Endothelial cell of umbilical vein (primary cell): ENCODE measurements at regions of chr17 and their contacts with region 1.

Region 1: DNA sequence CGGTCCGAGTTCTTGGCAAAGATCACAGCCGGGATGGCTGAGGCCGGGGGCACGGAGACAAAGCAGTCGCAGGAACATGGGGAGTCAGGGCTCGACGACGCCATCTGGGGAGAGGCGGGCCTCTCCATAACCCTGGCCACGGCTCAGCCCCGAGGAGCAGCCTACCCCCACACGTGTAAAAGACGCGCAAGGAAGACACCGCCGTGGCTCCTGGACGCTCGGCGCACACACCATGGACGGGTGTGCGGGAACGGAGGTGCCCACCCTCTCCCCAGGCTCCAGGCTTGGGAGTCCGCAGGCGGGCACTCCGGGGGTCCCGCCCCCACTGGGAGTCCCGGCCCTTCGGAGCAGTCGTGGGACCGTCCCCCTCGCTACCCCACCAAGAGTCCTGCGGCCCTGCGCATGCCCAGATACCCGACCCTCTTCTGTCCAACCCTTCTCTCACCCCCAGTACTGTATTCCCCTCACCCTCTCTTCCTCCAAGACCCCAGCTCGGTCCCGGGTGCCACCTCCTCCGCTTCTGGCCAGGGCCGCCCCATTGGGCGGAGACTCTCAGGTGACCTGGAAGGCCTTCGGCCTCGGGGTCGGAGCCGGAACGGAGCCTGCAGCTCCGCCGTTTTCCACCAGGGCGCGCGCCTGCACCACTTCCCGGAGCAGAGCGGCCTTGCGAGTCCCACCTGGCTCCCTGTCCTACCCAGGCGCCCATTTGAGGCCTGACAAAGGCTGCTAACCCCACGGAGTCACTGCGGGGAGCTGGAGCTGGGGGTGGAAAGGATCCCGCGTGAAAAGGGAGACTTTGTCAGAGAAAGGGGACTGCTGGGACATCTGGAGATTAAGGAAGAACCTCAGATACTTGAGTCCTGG is at the start of gene SCRN2:
- DNase-seq: peak; percentile 91
- H3K4me3 ChIP-seq: peak within 1 kb of the TSS; percentile 65 to 86 (median 65)
- H3K27ac ChIP-seq: no peak within 1 kb of the TSS
- H3K4me1 ChIP-seq: peaks cover 5% of the 10 kb centered on the region
- H3K27me3 ChIP-seq: no peaks in the 10 kb centered on the region
- CTCF ChIP-seq: peak; percentile 97 to 99
- POLR2A ChIP-seq: peak; percentile 32
- total RNA-seq, gene SCRN2: 31.1 and 31.7 TPM in 2 replicates

Region 2: GRCh38 chr17:47423406-47424295 is 417.3 kb before region 1 on chr17:
- CTCF ChIA-PET with region 1: no interaction called
- POLR2A ChIA-PET with region 1: no interaction called
- dilution Hi-C with region 1: no loop called
- intact Hi-C with region 1: no loop called
- DNase-seq: peak; percentile 15
- H3K4me3 ChIP-seq: peak overlapping the region; percentile 36 to 59 (median 46)
- H3K27ac ChIP-seq: no peak overlapping the region
- H3K4me1 ChIP-seq: no peaks in the 10 kb centered on the region
- H3K27me3 ChIP-seq: no peaks in the 10 kb centered on the region
- CTCF ChIP-seq: no peak
- POLR2A ChIP-seq: no peak

Region 3: GRCh38 chr17:47882247-47882646 is 41.3 kb after region 1 on chr17:
- CTCF ChIA-PET with region 1: interaction called, 367 read pairs
- POLR2A ChIA-PET with region 1: no interaction called
- dilution Hi-C with region 1: no loop called
- intact Hi-C with region 1: no loop called
- DNase-seq: peak; percentile 38
- H3K4me3 ChIP-seq: no peak overlapping the region
- H3K27ac ChIP-seq: no peak overlapping the region
- H3K4me1 ChIP-seq: peaks cover 7% of the 10 kb centered on the region
- H3K27me3 ChIP-seq: peaks cover 3 to 6% of the 10 kb centered on the region in 2 experiments
- CTCF ChIP-seq: no peak
- POLR2A ChIP-seq: no peak

Region 4: DNA sequence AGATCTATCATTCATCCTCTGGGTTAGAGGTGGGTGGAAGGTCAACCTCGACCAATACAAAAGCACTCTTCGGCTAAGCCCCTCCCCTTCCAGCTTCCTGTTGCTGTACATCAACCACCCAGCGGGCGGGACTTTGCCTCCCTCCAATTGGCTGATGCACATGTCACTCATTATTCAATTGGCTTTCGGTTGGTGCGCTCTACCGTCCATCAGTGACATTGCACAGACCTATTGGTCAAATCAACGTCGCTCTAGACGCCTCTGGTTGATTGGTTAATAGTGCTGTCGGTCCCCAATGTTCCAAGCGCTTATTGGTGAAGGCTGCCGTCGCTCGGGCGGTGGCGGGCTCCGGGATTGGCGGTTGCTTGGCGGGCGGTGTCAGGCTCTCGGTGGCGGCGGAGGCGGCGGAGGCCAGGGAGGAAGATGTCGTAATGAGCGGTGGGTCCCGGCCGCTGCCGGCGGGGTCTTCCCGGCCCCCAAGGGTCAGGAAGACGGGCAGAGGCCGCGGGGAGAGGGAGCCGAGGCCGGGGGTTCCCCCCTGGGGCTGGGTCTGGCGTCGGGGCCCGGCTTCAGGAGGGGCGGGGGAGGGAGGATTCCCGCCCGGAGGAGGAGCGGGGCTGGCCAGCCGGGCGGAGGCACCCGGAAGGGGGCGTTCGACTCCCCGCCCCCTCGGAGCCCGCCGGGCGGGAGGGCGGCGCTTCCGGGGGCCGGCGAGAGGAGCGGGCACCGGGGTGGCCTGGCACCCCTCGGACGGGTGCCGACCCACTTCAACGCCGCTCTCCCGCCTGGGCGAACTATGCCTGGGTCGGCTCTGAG is 55.1 kb after region 1 on chr17 and contains the start of gene SP2:
- CTCF ChIA-PET with region 1: interaction called, 367 read pairs
- POLR2A ChIA-PET with region 1: interaction called, 5 read pairs
- dilution Hi-C with region 1: no loop called
- intact Hi-C with region 1: loop called (anchors 1 kb)
- DNase-seq: peak; percentile 100
- H3K4me3 ChIP-seq: peak within 1 kb of the TSS; percentile 51 to 90 (median 84)
- H3K27ac ChIP-seq: peak within 1 kb of the TSS; percentile 75
- H3K4me1 ChIP-seq: peaks cover 15% of the 10 kb centered on the region
- H3K27me3 ChIP-seq: no peaks in the 10 kb centered on the region
- CTCF ChIP-seq: no peak
- POLR2A ChIP-seq: peak; percentile 60
- total RNA-seq, gene SP2: 18.5 and 18.6 TPM in 2 replicates

Region 5: DNA sequence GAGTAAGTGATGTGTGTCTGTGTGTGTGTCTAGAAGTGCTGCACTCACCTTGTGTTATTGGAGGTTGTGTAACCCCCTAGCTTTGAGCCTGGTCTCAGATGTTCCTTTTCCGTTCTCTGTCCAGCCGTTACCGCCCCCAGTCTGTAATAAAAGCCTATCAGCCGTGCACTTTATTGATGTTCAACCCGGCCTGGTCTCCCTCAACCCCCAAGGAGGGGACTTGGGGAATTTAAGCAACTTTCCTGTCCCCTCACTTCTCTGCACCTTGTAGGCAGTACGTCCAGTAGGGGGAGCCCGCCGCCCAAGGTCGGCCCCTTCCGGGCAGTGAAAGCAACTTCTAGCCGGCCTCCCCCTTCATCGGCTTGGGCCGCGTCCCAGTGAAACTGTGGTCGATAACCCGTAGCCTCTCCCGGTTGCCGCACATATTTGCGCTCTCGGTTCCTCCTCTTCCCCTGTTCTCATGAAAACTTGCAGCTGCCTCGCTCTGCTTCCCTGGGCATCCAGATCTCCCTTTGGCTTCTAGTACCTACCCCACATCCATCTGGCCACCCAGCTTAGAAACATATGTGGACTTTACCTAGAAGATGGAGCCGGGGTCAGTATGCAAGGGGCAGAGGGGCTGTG is 108.3 kb after region 1 on chr17:
- CTCF ChIA-PET with region 1: interaction called, 12 read pairs
- POLR2A ChIA-PET with region 1: no interaction called
- dilution Hi-C with region 1: no loop called
- intact Hi-C with region 1: no loop called
- DNase-seq: peak; percentile 77
- H3K4me3 ChIP-seq: no peak overlapping the region
- H3K27ac ChIP-seq: no peak overlapping the region
- H3K4me1 ChIP-seq: peaks cover 4% of the 10 kb centered on the region
- H3K27me3 ChIP-seq: no peaks in the 10 kb centered on the region
- CTCF ChIP-seq: peak; percentile 90 to 95
- POLR2A ChIP-seq: no peak

Region 6: GRCh38 chr17:48011405-48012150 is 170.6 kb after region 1 on chr17:
- CTCF ChIA-PET with region 1: interaction called, 5 read pairs
- POLR2A ChIA-PET with region 1: no interaction called
- dilution Hi-C with region 1: no loop called
- intact Hi-C with region 1: loop called (anchors 5 kb)
- DNase-seq: peak; percentile 43
- H3K4me3 ChIP-seq: peak overlapping the region; percentile 31 to 64 (median 61)
- H3K27ac ChIP-seq: no peak overlapping the region
- H3K4me1 ChIP-seq: peaks cover 9% of the 10 kb centered on the region
- H3K27me3 ChIP-seq: peaks cover 0 to 2% of the 10 kb centered on the region in 2 experiments
- CTCF ChIP-seq: peak; percentile 36 to 49
- POLR2A ChIP-seq: no peak